A549 (cell line): ENCODE measurements at regions of chr16 and their contacts with region 1.

Region 1: GRCh38 chr16:55701442-55702319 is 45.9 kb downstream of the SLC6A2 start:
- DNase-seq: peak; percentile 46 to 47
- ATAC-seq: peak; percentile 70 to 92; a peak in 5 of 6 replicates
- H3K4me3 ChIP-seq: no peak overlapping the region
- H3K27ac ChIP-seq: no peak overlapping the region
- H3K4me1 ChIP-seq: no peaks in the 10 kb centered on the region
- CTCF ChIP-seq: peak; percentile 61
- EP300 ChIP-seq: no peak
- POLR2A ChIP-seq: no peak
- RAD21 ChIP-seq: peak; percentile 60 to 74

Region 2: DNA sequence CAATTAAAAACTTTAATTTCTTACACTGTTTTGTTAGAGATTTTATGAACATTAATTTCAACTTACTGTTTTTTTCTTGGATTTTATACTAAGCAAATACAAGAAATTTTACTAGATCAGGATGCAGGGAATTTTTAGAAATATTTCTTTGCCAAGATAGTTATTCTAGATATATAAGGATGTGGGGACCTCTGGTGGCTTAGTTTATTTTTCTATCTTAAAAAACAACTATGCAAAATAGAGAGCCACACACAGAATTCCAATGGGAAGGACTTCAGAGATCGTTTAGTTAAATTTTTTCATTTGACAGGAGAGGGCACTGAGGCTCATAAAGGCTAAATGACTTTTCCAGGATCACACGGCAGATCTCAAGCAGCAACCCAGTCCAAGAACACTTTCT is 158.2 kb before region 1 on chr16:
- CTCF ChIA-PET with region 1: interaction called, 26 read pairs
- POLR2A ChIA-PET with region 1: no interaction called
- DNase-seq: peak in 1 of 2 experiments; percentile 31
- ATAC-seq: peak in 1 of 2 experiments; percentile 51; a peak in 3 of 6 replicates
- H3K4me3 ChIP-seq: no peak overlapping the region
- H3K27ac ChIP-seq: no peak overlapping the region
- H3K4me1 ChIP-seq: no peaks in the 10 kb centered on the region
- CTCF ChIP-seq: peak; percentile 61
- EP300 ChIP-seq: no peak
- POLR2A ChIP-seq: no peak
- RAD21 ChIP-seq: peak; percentile 66 to 79

Region 3: GRCh38 chr16:55655860-55656695 is 45.6 kb before region 1 on chr16 and contains the start of gene SLC6A2:
- CTCF ChIA-PET with region 1: interaction called, 12 read pairs
- POLR2A ChIA-PET with region 1: interaction called, 7 read pairs
- DNase-seq: peak in 1 of 2 experiments; percentile 39
- ATAC-seq: peak; percentile 57 to 82; a peak in 4 of 6 replicates
- H3K4me3 ChIP-seq: no peak within 1 kb of the TSS
- H3K27ac ChIP-seq: no peak within 1 kb of the TSS
- H3K4me1 ChIP-seq: no peaks in the 10 kb centered on the region
- CTCF ChIP-seq: no peak
- EP300 ChIP-seq: no peak
- POLR2A ChIP-seq: no peak
- RAD21 ChIP-seq: no peak
- polyA plus RNA-seq, gene SLC6A2: not detected in 2 replicates

Region 4: DNA sequence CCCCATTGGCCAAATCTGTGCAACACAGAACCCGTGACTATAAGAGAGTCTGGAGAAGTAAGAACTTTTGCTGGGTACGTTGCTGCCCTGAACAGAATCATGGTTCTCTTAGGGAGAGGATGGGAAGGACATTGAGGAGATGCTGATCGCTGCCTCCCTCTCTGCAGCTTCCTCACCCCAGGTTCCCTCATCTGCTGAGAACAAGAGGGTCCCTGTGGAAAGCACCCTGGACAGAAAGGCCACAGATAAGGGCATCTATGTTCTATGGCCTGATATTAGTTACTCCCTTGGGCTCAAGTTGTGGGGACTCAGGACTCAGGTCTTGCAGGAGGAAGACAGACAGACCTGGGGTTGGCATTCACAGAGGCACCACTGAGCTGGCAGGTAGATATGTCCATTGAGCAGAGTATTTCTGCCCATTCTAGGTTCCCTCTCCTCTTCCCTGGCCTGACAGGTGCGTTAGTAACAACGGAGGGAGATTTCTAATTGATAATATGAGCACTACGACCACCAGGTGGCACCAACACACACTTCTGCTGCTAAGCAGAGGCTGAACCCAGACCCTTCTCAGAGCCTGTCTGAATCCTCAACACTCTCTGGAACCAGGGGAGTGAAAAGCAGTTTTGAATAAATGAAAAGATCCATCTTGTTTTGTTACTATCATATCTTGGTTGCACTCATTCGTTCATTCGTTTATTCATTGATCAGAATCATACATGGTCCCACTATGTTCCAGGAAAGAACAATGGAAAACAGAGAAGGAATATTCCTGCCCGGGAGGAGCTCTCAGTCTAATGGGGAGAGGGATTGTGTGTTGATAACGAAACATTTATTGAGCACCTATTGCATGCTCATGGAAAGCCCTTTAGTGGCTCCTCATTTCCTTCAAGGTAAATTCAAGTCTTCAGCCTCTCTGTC is 10.5 kb after region 1 on chr16:
- CTCF ChIA-PET with region 1: interaction called, 13 read pairs
- POLR2A ChIA-PET with region 1: no interaction called
- DNase-seq: peak; percentile 58 to 70
- ATAC-seq: peak; percentile 84 to 99; a peak in 4 of 6 replicates
- H3K4me3 ChIP-seq: no peak overlapping the region
- H3K27ac ChIP-seq: no peak overlapping the region
- H3K4me1 ChIP-seq: no peaks in the 10 kb centered on the region
- CTCF ChIP-seq: peak; percentile 79
- EP300 ChIP-seq: no peak
- POLR2A ChIP-seq: no peak
- RAD21 ChIP-seq: peak; percentile 75 to 81

Region 5: GRCh38 chr16:55842369-55843104 is 140.9 kb after region 1 on chr16:
- CTCF ChIA-PET with region 1: interaction called, 16 read pairs
- POLR2A ChIA-PET with region 1: no interaction called
- DNase-seq: peak; percentile 36 to 64
- ATAC-seq: peak; percentile 84 to 92; a peak in 5 of 6 replicates
- H3K4me3 ChIP-seq: no peak overlapping the region
- H3K27ac ChIP-seq: no peak overlapping the region
- H3K4me1 ChIP-seq: no peaks in the 10 kb centered on the region
- CTCF ChIP-seq: peak; percentile 76
- EP300 ChIP-seq: no peak
- POLR2A ChIP-seq: no peak
- RAD21 ChIP-seq: peak; percentile 82 to 92